Activated CD8-positive, alpha-beta T cell treated with anti-CD3 and anti-CD28 coated beads, Interleukin-2, amount 10 ng/mL, durations not matched to agents 7 days and 5 days (primary cell): ENCODE measurements at regions of chr16 and their contacts with region 1.

Region 1: DNA sequence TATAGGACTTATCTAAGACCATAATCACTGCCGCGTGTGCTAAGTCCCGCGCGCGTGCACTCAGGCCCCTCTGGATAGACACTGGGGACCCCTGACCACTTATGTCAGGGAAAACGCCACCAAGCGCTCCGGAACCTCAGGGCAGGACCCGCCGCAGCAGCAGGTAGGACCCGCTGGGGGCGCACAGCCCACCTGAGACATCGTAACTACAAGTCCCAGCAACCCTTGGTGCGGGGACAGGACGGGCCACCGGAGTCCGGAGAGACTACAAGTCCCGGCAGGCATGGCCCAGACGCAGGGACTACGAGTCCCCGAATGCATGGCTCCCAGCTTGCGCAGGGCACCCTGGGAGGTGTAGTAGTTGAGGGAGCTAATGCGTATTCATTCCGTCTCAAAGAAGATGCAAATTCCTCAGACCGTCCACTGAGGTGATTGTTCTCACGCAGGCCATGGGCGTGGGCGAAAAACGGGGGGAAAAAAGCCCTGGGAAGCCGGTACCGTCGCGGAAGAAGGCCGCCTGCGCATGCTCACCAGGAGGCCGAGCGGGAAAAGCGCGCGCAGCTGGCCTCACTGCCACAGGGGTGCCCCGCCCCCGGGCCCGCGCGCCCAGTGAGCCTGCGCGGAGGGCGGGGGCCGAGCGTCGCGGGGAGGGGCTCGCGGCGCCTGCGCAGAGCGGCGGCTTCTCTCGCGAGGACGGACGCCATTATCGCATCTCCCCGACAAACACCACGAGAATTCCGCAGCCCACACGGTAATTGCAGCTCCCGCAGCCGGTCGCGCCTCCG is at the start of gene BANP:
- DNase-seq: peak; percentile 99
- ATAC-seq: peak; percentile 96
- H3K4me3 Mint-ChIP-seq: peak within 1 kb of the TSS; percentile 96
- H3K27ac Mint-ChIP-seq: peak within 1 kb of the TSS; percentile 100
- H3K4me1 Mint-ChIP-seq: peaks cover 79% of the 10 kb centered on the region
- H3K27me3 Mint-ChIP-seq: no peaks in the 10 kb centered on the region
- total RNA-seq, gene BANP: 34.1 to 39.8 TPM

Region 2: DNA sequence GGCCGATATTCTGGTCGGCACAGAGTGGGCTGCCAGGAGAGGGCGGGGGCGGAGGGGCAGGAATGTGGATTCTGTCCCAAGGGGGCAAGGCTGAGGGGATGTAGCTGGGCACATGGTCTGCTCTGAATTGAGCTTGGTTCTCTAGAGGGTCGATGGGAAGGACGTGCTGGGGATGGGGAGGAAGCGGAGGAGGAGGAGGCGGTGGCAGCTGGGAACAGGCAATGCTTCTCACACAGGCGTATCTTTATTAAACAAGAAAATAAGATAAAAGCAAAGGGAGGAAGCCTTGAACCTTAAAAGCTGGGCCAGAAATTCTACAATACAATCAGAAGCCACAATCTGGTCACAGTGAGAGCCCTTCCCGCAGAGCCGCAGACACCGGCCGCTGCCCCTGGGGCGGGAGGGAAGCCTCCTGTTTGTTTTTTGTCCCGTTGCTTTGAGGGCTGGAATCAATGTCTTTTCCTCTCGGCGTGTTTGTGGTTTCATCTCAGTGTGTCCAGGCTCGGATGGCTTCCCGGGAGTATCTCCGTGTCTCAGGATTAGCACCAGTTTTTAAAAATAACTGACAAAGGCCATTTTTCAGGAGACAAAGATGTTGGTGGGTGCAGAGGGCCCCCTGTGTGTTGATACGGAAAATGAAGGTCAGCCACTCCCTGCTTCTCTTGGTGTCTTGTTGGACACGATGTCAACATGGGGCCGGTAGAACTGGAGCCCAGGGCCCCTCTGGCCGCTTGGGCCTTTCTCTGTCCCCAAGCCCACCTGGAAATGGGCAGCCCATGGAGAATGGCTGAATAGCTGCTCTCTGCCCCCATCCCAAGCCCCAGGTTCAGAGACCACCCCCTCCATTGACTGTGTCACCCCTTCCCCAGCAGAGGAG is 69.4 kb before region 1 on chr16:
- CTCF ChIA-PET with region 1: no interaction called
- POLR2A ChIA-PET with region 1: no interaction called
- DNase-seq: no peak
- ATAC-seq: no peak
- H3K4me3 Mint-ChIP-seq: no peak overlapping the region
- H3K27ac Mint-ChIP-seq: no peak overlapping the region
- H3K4me1 Mint-ChIP-seq: peaks cover 18% of the 10 kb centered on the region
- H3K27me3 Mint-ChIP-seq: peaks cover 14% of the 10 kb centered on the region

Region 3: GRCh38 chr16:87963400-87963799 is 12.4 kb after region 1 on chr16:
- CTCF ChIA-PET with region 1: interaction called, 7 read pairs
- POLR2A ChIA-PET with region 1: interaction called, 20 read pairs
- DNase-seq: peak; percentile 76
- ATAC-seq: peak; percentile 85
- H3K4me3 Mint-ChIP-seq: no peak overlapping the region
- H3K27ac Mint-ChIP-seq: peak overlapping the region; percentile 82
- H3K4me1 Mint-ChIP-seq: peaks cover 72% of the 10 kb centered on the region
- H3K27me3 Mint-ChIP-seq: no peaks in the 10 kb centered on the region